Activated CD4-positive, alpha-beta T cell treated with anti-CD3 and anti-CD28 coated beads, Interleukin-2, amount 10 ng/mL, durations not matched to agents 24 days and 14 days (primary cell): ENCODE measurements at regions of chr6 and their contacts with region 1.

Region 1: GRCh38 chr6:273551-274058 is 18.7 kb upstream of the DUSP22 start:
- DNase-seq: peak; percentile 38
- H3K4me3 Mint-ChIP-seq: no peak overlapping the region
- H3K27ac Mint-ChIP-seq: no peak overlapping the region
- H3K4me1 Mint-ChIP-seq: peaks cover 15% of the 10 kb centered on the region
- H3K27me3 Mint-ChIP-seq: peaks cover 11% of the 10 kb centered on the region

Region 2: GRCh38 chr6:219641-220198 is 53.9 kb before region 1 on chr6:
- intact Hi-C with region 1: loop called (anchors 1 kb)
- DNase-seq: no peak
- H3K4me3 Mint-ChIP-seq: no peak overlapping the region
- H3K27ac Mint-ChIP-seq: no peak overlapping the region
- H3K4me1 Mint-ChIP-seq: peaks cover 68% of the 10 kb centered on the region
- H3K27me3 Mint-ChIP-seq: no peaks in the 10 kb centered on the region

Region 3: DNA sequence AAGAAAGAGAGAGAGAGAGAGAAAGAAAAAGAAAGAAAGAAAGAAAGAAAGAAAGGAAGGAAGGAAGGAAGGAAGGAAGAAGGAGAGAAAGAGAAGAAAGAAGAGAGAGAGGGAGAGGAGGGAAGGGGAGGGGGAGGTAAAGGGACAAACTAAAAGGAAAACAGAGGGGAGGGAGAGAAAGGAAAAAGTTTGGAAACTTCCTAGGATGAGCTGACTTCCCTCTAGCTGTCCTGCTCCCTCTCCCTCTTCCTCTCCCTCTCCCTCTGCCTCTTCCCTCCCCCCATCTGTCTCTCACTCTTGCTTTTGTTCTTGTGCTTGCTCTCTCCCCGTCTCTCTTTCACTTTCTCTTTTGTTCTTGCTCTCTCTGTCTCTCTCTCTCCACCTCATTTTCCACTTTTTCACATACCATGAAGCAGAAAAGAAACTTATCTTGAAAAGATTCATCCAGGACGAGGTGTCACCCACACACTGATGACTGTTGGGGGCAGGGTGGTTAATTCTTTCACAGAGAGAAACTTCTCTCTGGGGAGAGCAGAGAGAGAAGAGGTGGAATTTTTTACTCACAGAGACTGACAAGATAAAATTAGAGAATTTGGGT is 37.7 kb before region 1 on chr6:
- intact Hi-C with region 1: loop called (anchors 1 kb)
- DNase-seq: peak; percentile 87
- H3K4me3 Mint-ChIP-seq: peak overlapping the region; percentile 74
- H3K27ac Mint-ChIP-seq: peak overlapping the region; percentile 85
- H3K4me1 Mint-ChIP-seq: peaks cover 47% of the 10 kb centered on the region
- H3K27me3 Mint-ChIP-seq: no peaks in the 10 kb centered on the region

Region 4: DNA sequence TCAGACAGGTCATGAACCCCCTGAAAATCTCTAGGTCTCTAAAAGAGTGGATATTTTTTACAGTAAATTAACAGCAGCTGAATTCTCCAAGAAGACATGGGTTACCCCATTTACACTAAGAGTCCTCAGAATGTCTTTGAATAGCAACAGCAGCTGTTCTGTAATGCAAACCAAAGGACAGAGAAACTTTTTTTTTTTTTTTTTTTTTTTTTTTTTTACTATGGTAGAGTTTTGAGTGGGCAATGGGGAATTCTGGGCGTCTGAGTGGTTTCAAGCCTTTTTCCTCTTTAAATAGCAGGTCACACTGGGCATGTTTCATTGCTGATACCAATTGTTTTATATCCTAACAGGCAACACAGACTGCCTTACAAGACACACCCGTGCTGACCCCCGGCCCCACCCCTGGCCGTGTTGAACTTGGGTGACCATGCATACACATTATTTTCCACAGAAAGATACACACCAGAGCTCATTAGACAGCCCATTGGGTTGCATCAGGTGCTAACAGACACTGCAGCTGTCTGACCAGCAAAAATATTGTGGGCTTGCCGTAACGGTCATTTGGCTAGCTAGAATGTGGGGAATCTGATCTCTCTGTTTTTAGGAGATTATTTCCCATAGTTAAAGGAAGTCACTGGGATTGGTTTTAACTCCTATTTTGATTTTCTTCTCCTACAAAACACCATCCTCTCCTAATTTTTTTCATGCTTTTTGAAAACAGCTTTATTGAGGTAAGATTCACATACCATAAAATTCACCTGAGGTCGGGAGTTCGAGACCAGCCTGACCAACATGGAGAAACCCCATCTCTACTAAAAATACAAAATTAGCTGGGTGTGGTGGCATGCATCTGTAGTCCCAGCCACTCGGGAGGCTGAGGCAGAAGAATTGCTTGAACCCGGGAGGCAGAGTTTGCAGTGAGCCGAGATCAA is 91.3 kb after region 1 on chr6:
- intact Hi-C with region 1: no loop called
- DNase-seq: no peak
- H3K4me3 Mint-ChIP-seq: no peak overlapping the region
- H3K27ac Mint-ChIP-seq: no peak overlapping the region
- H3K4me1 Mint-ChIP-seq: no peaks in the 10 kb centered on the region
- H3K27me3 Mint-ChIP-seq: peaks cover 8% of the 10 kb centered on the region